ENCODE measurements at regions of chr7 and their contacts with region 1.

Region 1: DNA sequence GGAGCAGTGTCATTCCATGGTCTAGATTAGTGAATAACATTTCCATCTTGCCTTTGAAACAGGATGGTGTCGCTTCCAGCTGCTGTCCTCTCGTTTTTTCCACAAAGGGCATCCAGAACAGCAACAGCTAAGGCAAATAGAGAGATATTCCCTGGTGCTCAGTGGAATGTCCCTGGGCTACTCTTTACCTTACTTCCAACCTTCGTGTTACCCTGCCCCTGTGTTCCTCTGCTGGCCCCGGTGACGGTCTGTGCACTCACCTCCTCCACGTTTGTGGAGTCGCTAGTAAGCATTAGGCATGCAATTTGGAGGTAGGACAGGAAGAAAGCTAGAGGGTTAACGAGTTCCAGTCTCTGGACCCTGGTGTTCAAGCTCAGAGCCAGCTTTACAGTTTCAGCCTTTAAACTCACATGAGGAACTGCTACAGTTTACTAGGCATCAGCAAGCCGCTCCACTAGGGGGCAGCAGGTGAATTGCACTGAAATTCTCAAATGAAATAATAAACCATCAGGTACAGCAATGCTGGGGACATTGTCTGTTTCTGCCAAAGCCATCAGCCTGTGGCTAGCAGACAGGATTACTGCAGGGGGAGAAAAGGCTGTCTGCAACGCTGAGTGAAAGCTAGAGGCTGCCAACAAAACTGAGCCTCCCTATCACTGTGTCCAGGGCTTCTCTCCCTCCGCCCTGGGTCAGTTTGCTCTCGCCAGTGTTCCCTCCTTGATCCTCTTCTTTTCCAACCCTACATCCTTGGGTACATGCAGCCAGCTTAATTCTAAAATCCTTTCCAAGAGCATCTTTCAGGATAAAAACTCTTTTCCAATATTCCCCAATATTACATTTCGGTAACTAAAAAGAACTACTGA is 9.0 kb downstream of the MRPL32 start:
- H3K4me3 Mint-ChIP-seq: no peak overlapping the region
- H3K27ac Mint-ChIP-seq: no peak overlapping the region
- H3K4me1 Mint-ChIP-seq: peaks cover 6% of the 10 kb centered on the region
- H3K27me3 Mint-ChIP-seq: no peaks in the 10 kb centered on the region

Region 2: DNA sequence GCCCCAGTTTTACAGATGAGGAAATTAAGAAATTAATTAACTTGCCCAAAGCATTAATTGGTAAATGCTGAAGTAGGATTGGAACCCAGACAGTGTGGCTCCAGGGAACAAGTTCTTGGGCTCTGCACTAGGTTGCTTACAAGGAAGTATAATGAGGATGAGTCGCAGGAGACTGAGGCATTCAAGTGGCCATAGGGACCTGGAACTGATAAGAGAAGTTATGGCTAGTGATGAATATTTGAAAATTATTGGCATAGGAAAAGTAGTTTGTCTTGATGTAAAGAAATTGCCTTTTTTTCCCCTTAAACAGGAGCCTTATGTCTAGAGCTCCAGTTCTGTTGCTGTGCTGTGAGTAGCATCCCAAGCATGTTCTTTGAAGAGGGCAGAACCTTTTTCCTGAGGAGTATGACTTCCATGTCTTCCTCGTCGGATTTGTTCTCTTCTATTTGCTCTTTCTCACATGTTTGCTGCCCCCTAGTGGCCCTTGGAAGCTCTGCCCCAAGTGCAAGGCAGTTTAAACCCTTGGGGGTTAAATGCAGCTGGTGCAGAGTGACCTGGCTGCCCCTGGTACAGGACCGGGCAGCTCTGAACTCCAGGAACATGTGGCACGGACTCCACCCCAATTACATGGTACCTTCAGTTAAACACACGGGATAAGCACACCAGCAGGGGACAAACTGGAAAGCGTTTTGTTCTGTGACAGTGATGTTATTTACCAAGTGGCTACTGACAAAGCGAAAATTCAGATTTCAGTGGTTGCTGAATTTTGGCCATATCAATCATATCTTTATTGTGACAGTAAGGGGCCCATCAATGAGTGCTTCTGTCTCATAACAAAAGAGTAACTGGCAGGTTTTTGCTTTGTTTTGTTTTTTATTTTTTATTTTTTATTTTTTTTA is 320.0 kb after region 1 on chr7:
- intact Hi-C with region 1: loop called (anchors 1 kb)
- H3K4me3 Mint-ChIP-seq: no peak overlapping the region
- H3K27ac Mint-ChIP-seq: no peak overlapping the region
- H3K4me1 Mint-ChIP-seq: no peaks in the 10 kb centered on the region
- H3K27me3 Mint-ChIP-seq: no peaks in the 10 kb centered on the region

Region 3: DNA sequence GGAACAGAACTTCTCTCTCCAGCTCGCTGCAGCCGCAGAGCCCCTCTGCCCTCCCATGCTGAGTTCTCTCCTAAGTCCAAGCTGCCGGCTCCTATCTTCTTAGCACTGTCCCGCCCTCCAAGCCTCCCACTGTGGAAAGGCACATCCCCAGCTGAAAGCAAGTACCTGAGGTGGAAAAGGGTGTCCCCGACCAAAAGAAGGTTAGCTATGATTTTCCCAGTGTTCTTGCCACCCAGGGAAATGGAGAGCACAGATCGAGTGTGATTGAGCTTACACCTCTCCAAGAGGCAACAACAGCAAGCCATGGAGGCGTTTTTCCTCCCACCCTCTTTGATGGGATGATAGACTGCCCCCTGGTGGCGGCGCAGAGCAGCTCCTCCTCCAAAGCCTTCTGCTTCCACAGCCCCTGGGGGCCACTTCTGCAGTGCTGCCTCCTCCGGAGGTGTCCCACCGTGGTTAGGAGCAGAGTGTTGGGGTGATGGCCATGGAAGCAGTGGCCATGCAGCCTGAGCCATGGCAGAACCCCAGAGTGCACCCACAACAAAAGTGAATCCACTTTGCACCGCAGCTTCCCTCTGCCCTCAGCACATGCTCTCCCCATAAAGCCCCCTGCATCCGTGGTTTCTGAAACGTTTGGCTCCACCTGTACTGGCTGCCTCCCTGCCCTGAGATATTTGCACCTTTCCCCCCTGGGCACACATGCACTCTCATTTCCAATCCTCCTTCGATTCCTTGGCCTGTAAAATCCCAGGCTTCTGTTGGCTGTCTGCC is 498.6 kb after region 1 on chr7:
- intact Hi-C with region 1: loop called (anchors 5 kb)
- H3K4me3 Mint-ChIP-seq: no peak overlapping the region
- H3K27ac Mint-ChIP-seq: no peak overlapping the region
- H3K4me1 Mint-ChIP-seq: no peaks in the 10 kb centered on the region
- H3K27me3 Mint-ChIP-seq: peaks cover 3% of the 10 kb centered on the region

Region 4: GRCh38 chr7:43700059-43700501 is 758.9 kb after region 1 on chr7:
- intact Hi-C with region 1: loop called (anchors 10 kb)
- H3K4me3 Mint-ChIP-seq: no peak overlapping the region
- H3K27ac Mint-ChIP-seq: no peak overlapping the region
- H3K4me1 Mint-ChIP-seq: no peaks in the 10 kb centered on the region
- H3K27me3 Mint-ChIP-seq: no peaks in the 10 kb centered on the region